ENCODE measurements at regions of chr2 and their contacts with region 1.

Region 1: GRCh38 chr2:68441179-68441993 is 25.7 kb downstream of the FBXO48 start:
- DNase-seq: peak; percentile 76
- CTCF ChIP-seq: peak; percentile 81

Region 2: DNA sequence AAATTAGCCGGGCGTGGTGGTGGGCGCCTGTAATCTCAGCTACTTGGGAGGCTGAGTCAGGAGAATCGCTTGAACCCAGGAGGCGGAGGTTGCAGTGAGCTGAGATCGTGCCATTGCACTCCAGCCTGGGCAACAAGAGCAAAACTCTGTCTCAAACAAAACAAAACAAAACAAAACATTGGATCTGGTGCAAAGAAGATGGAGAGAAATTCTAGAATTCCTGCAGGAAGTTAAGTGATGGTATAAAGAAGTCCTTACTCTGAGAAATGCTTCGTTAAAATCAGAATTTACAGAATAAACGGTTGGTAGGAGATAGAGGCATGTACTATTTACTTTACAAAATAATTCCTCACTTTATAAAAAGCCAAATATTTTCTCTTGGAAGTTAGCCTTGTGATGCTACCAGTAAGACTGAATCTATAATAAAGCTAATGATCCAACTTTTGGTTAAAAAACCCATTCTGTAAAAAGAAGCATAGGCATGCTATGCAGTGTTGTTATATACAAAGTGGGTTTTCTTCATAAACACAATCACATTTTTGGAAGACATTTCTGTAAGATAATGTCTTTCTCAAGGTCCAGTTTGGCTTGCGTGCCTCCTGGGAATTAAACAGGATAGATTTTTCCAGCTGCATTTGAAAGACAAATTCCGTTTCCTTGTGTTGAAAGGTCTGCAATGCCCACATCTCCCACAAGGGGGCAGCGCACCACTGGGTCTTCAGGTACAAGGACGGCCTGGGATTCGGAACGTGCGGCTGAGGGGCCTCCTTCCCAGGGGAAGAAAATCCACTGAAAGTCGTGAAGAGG is 319.3 kb before region 1 on chr2:
- in situ Hi-C with region 1: loop called (anchors 10 kb)
- DNase-seq: peak; percentile 46
- CTCF ChIP-seq: peak; percentile 95

Region 3: GRCh38 chr2:68295516-68295915 is 145.9 kb before region 1 on chr2:
- in situ Hi-C with region 1: loop called (anchors 10 kb)
- DNase-seq: no peak
- CTCF ChIP-seq: no peak

Region 4: GRCh38 chr2:68365087-68365486 is 76.3 kb before region 1 on chr2 and contains the start of gene PLEK:
- in situ Hi-C with region 1: loop called (anchors 5 kb)
- DNase-seq: no peak
- CTCF ChIP-seq: no peak

Measured in GM13977 (cell line).